Left lung (tissue), 14 donors: ENCODE measurements at regions of chr19 and their contacts with region 1.

Region 1: DNA sequence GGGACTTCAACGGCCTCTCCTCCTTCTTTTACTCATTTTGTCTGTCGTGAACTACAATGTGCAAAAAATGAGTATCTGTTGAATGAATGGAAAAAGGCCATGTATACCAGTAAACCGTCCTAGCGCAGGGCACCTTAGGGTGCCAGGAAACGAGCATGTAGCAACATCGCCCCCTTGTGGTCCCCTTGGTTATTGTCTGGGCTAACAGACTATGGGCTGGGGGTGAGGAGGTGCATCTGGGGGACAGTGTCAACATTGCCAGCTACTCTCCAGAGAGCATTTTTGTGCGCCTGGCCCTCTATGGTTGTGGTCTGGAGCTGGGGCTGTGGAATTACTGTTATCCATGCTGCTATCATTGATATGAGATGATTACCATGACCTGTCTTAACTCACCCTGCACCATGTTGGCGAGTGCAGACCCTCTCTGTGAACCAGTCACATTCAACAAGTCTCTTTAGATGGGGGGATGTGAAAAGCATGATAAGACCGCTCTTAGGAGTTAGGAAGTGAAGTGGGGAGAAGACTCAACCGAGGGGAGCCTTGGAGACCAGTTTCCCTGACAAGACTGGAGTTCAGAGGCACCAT is 22.8 kb upstream of the SIGLEC11 start:
- DNase-seq: peak in 3 of 4 donors; percentile 24 to 54 (median 48)
- ATAC-seq: peak; percentile 57
- H3K4me3 ChIP-seq: no peak overlapping the region
- H3K27ac ChIP-seq: no peak overlapping the region
- H3K4me1 ChIP-seq: no peaks in the 10 kb centered on the region
- H3K27me3 ChIP-seq: no peaks in the 10 kb centered on the region
- CTCF ChIP-seq: peak; percentile 74 to 84

Region 2: DNA sequence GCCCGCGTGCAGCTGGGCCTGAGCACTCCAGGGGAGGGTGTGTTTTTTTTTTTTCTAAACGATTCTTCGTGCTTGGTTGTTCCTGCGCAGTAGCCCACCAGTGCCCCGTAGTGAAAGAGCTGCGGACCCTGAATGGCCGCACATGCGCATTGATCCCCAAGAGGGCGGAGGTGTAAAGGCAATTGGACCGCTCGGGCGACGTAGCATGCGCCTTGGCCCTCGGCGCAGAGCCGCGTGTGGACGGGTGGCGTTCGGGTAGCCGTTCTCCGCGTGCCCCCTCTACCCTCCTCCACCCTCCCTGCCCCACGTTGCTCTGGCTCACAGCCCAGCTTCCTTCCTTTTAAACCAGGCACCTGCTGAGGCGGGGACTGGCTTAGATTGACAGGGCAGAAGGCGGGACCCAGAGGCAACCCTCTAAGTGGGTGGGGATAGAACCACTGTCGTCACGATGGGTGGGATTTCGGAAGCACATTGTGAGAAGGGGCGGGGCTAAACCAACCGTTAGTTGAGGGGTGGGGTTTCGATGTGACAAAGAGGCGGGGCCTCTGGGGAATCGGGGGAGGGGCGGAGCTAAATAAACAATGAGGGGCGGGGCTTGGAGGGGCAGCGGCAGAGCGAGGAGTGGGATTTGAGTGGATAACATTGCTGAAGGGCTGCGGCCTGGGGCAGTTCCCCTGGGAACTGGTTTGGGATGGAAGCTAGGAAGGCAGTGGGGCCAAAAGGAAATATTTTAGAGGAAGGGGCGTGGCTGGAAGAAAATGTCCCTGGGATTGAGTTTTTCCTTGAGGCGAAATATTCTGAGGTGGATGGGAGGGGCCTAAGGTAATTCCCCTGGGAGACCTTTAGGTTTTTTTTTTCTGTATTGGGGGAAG is 53.9 kb before region 1 on chr19:
- intact Hi-C with region 1: loop called in 1 of 2 experiments (anchors 10 kb)
- DNase-seq: peak; percentile 92 to 94 (median 92)
- ATAC-seq: peak; percentile 91
- H3K4me3 ChIP-seq: peak overlapping the region; percentile 99
- H3K27ac ChIP-seq: peak overlapping the region; percentile 93 to 95
- H3K4me1 ChIP-seq: peaks cover 0 to 49% of the 10 kb centered on the region in 2 donors
- H3K27me3 ChIP-seq: no peaks in the 10 kb centered on the region
- CTCF ChIP-seq: no peak

Region 3: GRCh38 chr19:49939721-49940481 is 43.8 kb before region 1 on chr19:
- intact Hi-C with region 1: loop called (anchors 5 to 10 kb)
- DNase-seq: peak in 1 of 4 donors; percentile 43
- ATAC-seq: no peak
- H3K4me3 ChIP-seq: no peak overlapping the region
- H3K27ac ChIP-seq: no peak overlapping the region
- H3K4me1 ChIP-seq: peaks cover 0 to 13% of the 10 kb centered on the region in 2 donors
- H3K27me3 ChIP-seq: no peaks in the 10 kb centered on the region
- CTCF ChIP-seq: no peak